PC-3 (cell line): ENCODE measurements at regions of chr6 and their contacts with region 1.

Region 1: GRCh38 chr6:113632220-113632864 is 224.8 kb upstream of the MARCKS start:
- DNase-seq: peak; percentile 89
- ATAC-seq: peak; percentile 89
- H3K4me3 ChIP-seq: peak overlapping the region; percentile 60
- H3K27ac ChIP-seq: peak overlapping the region; percentile 97
- H3K4me1 ChIP-seq: peaks cover 39% of the 10 kb centered on the region
- H3K27me3 ChIP-seq: no peaks in the 10 kb centered on the region
- CTCF ChIP-seq: no peak

Region 2: DNA sequence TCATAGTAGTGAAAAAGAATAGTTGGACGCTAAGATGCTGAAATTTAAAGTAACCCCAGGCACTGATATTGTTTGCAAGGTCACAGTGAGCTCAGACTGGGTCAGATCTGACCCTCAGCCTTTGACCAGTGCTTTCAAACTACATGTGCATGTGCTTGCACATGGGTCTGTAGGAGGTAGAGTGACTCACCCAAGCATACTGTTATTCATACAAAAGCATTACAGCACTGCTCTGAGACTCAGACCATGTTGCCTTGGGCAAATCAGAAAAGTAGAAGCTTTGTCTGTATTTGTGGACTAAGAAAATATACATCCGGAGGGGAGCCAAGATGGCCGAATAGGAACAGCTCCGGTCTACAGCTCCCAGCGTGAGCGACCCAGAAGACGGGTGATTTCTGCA is 101.5 kb before region 1 on chr6:
- CTCF ChIA-PET with region 1: no interaction called
- POLR2A ChIA-PET with region 1: no interaction called
- intact Hi-C with region 1: no loop called
- DNase-seq: peak; percentile 66
- ATAC-seq: peak; percentile 80
- H3K4me3 ChIP-seq: no peak overlapping the region
- H3K27ac ChIP-seq: no peak overlapping the region
- H3K4me1 ChIP-seq: peaks cover 7% of the 10 kb centered on the region; the same call in 1 of the 2 replicates
- H3K27me3 ChIP-seq: no peaks in the 10 kb centered on the region
- CTCF ChIP-seq: no peak

Region 3: DNA sequence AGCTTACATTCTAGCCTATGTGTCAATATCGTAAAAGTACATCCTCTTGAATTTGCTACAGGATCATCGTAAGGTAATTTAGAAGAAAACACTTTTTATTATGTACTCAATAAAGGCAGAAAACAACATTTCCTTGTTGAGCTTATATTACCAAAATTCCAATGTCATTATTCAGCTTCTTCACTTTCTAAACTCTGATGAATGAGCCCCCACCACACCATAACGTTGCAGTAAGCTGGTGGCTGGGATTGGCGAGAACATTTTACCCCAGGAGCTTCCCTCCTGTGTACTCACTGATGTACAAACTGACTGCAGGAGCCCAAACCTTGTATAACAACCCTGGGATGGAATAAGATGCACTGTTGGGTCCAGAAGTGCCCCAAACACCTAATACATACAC is 13.3 kb before region 1 on chr6:
- CTCF ChIA-PET with region 1: interaction called, 15 read pairs
- POLR2A ChIA-PET with region 1: interaction called, 3 read pairs
- intact Hi-C with region 1: no loop called
- DNase-seq: peak; percentile 39
- ATAC-seq: peak; percentile 78
- H3K4me3 ChIP-seq: no peak overlapping the region
- H3K27ac ChIP-seq: no peak overlapping the region
- H3K4me1 ChIP-seq: peaks cover 9% of the 10 kb centered on the region
- H3K27me3 ChIP-seq: no peaks in the 10 kb centered on the region
- CTCF ChIP-seq: no peak

Region 4: DNA sequence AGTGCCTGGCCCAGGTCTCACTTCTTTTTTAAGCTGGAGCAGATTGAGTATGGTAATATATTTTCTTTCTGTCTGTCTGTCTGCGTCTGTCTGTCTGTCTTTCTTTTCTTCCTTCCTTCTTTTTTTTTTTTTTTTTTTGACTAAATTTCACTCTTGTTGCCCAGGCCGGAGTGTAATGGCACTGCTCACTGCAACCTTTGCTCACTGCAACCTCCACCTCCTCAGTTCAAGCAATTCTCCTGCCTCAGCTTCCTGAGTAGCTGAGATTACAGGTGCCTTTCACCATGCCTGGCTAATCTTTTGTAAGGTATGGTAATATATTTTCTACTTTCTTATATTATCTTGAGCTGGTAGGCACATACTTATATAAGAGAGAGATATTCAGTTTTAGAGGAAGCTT is 28.5 kb after region 1 on chr6:
- CTCF ChIA-PET with region 1: no interaction called
- POLR2A ChIA-PET with region 1: no interaction called
- intact Hi-C with region 1: no loop called
- DNase-seq: no peak
- ATAC-seq: no peak
- H3K4me3 ChIP-seq: no peak overlapping the region
- H3K27ac ChIP-seq: no peak overlapping the region
- H3K4me1 ChIP-seq: no peaks in the 10 kb centered on the region
- H3K27me3 ChIP-seq: no peaks in the 10 kb centered on the region
- CTCF ChIP-seq: no peak

Region 5: GRCh38 chr6:113719056-113719455 is 86.7 kb after region 1 on chr6:
- CTCF ChIA-PET with region 1: no interaction called
- POLR2A ChIA-PET with region 1: no interaction called
- intact Hi-C with region 1: no loop called
- DNase-seq: peak; percentile 45
- ATAC-seq: no peak; the same call in 1 of the 2 replicates
- H3K4me3 ChIP-seq: no peak overlapping the region
- H3K27ac ChIP-seq: no peak overlapping the region
- H3K4me1 ChIP-seq: no peaks in the 10 kb centered on the region
- H3K27me3 ChIP-seq: no peaks in the 10 kb centered on the region
- CTCF ChIP-seq: no peak